Lower lobe of right lung (tissue), 2 donors: ENCODE measurements at regions of chr11 and their contacts with region 1.

Region 1: DNA sequence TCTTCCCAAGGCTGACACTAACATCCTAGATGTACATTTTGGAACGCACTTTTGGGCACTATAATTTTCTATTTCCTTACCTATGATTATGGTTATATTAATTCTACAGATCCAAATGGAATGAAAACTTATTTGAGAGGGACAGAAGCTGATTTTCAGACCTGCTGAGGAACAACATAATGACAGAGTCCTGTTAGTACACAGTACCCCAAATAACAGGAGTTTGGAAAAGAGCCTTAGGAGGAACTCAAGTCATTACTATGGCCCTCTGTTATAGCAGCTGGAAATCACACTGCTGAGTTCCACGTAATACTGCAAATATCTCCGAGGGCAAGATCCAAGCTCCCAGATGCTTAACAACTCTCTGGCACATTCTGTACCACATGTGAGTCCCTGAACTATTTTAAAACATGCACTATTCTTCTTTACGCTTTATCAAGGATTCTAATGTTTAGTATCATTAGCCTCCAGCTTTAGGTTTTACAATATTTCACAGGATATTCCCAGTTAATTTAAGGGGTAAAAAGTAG is 1027.7 kb upstream of the CCDC90B start:
- DNase-seq: no peak
- ATAC-seq: no peak
- H3K4me3 ChIP-seq: no peak overlapping the region
- H3K27ac ChIP-seq: no peak overlapping the region
- H3K4me1 ChIP-seq: no peaks in the 10 kb centered on the region
- H3K27me3 ChIP-seq: no peaks in the 10 kb centered on the region
- CTCF ChIP-seq: no peak

Region 2: GRCh38 chr11:84215672-84216071 is 98.2 kb before region 1 on chr11:
- intact Hi-C with region 1: loop called (anchors 5 kb)
- DNase-seq: no peak
- ATAC-seq: no peak
- H3K4me3 ChIP-seq: no peak overlapping the region
- H3K27ac ChIP-seq: no peak overlapping the region
- H3K4me1 ChIP-seq: no peaks in the 10 kb centered on the region
- H3K27me3 ChIP-seq: no peaks in the 10 kb centered on the region
- CTCF ChIP-seq: no peak

Region 3: DNA sequence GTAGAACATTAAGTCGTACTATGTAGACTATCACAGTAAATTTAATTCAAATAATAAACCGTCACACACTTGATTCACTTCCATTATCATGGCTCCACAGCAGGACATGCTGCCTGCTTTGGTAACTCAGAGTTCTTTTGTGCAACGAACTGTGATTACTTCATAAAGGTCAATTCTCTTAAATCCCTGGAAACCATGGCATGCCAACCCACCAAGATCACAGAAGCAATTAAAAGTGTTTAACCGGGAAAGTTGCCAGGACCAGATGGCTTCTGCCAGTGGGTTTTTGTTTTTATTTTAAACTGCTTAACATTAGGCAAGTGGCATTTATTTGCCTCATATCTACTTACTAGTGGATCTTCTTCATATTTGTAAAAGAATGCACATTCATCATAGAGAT is 151.1 kb after region 1 on chr11:
- intact Hi-C with region 1: no loop called
- DNase-seq: no peak
- ATAC-seq: no peak
- H3K4me3 ChIP-seq: no peak overlapping the region
- H3K27ac ChIP-seq: no peak overlapping the region
- H3K4me1 ChIP-seq: no peaks in the 10 kb centered on the region
- H3K27me3 ChIP-seq: no peaks in the 10 kb centered on the region
- CTCF ChIP-seq: no peak

Region 4: GRCh38 chr11:84543367-84544159 is 229.7 kb after region 1 on chr11:
- intact Hi-C with region 1: no loop called
- DNase-seq: no peak
- ATAC-seq: no peak
- H3K4me3 ChIP-seq: no peak overlapping the region
- H3K27ac ChIP-seq: no peak overlapping the region
- H3K4me1 ChIP-seq: no peaks in the 10 kb centered on the region
- H3K27me3 ChIP-seq: no peaks in the 10 kb centered on the region
- CTCF ChIP-seq: no peak